OCI-LY7 (cell line): ENCODE measurements at regions of chr7 and their contacts with region 1.

Region 1: DNA sequence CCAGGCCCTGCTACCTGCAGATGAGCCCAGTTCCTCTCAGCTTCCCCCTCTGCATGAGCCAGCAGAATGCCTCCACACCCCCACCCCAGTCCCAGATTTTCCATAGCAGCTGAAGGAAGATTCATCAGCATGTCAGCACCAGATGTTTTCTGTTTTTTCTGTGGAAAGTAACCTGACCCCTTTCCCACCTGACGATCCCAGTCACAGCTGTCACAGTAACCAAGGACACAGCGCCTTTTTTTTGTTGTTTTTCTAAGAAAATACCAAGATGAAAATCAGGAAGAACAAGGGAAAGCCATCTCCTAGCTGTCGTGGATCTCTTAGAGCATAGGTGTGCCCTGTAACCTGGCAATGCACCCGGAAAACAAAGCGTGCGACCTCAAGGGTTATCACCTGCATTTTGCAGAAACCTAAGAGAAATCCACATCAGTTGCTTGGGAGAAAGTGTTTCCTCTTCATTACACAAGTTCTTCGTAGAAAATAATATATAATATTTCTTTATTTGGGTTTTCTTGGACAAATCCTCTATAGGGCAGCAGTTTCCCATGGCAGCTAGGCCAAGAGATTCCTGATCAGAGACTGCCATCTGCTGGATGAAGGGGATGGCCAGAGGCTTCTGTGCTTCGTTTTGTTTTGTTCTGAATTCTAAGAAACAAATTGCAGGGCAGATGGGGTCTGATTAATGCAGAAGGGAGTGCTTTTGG is 401.9 kb downstream of the TNS3 start:
- DNase-seq: peak; percentile 85
- H3K4me3 ChIP-seq: peak overlapping the region; percentile 23
- H3K27ac ChIP-seq: peak overlapping the region; percentile 8
- H3K4me1 ChIP-seq: peaks cover 55% of the 10 kb centered on the region
- CTCF ChIP-seq: peak; percentile 98

Region 2: GRCh38 chr7:45923290-45923689 is 1256.7 kb before region 1 on chr7:
- CTCF ChIA-PET with region 1: no interaction called
- POLR2A ChIA-PET with region 1: interaction called, 3 read pairs
- intact Hi-C with region 1: loop called (anchors 2 kb)
- DNase-seq: peak; percentile 57
- H3K4me3 ChIP-seq: no peak overlapping the region
- H3K27ac ChIP-seq: no peak overlapping the region
- H3K4me1 ChIP-seq: peaks cover 4% of the 10 kb centered on the region
- CTCF ChIP-seq: peak; percentile 99

Region 3: DNA sequence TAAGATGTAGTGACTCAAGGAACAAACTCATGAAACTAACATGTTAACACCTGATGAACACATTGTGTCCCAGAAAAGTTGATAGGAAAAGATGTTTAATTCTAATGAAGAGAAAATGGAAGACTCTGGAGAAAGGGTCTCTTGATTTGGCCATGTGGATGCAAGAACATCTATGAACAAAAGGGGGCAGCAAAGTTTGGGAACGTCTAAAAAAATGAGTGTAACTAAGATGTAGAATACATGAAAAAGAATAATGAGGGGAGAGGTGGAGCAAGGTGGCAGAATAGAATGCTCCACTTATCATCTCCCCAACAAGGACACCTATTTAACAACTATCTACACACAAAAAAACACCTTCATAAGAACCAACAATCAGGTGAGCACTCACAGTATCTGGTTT is 403.2 kb before region 1 on chr7:
- CTCF ChIA-PET with region 1: no interaction called
- POLR2A ChIA-PET with region 1: no interaction called
- intact Hi-C with region 1: loop called (anchors 1 kb)
- DNase-seq: peak; percentile 53
- H3K4me3 ChIP-seq: no peak overlapping the region
- H3K27ac ChIP-seq: no peak overlapping the region
- H3K4me1 ChIP-seq: no peaks in the 10 kb centered on the region
- CTCF ChIP-seq: peak; percentile 80

Region 4: GRCh38 chr7:47008461-47008860 is 171.5 kb before region 1 on chr7:
- CTCF ChIA-PET with region 1: no interaction called
- POLR2A ChIA-PET with region 1: no interaction called
- intact Hi-C with region 1: loop called (anchors 10 kb)
- DNase-seq: no peak
- H3K4me3 ChIP-seq: no peak overlapping the region
- H3K27ac ChIP-seq: no peak overlapping the region
- H3K4me1 ChIP-seq: no peaks in the 10 kb centered on the region
- CTCF ChIP-seq: no peak

Region 5: DNA sequence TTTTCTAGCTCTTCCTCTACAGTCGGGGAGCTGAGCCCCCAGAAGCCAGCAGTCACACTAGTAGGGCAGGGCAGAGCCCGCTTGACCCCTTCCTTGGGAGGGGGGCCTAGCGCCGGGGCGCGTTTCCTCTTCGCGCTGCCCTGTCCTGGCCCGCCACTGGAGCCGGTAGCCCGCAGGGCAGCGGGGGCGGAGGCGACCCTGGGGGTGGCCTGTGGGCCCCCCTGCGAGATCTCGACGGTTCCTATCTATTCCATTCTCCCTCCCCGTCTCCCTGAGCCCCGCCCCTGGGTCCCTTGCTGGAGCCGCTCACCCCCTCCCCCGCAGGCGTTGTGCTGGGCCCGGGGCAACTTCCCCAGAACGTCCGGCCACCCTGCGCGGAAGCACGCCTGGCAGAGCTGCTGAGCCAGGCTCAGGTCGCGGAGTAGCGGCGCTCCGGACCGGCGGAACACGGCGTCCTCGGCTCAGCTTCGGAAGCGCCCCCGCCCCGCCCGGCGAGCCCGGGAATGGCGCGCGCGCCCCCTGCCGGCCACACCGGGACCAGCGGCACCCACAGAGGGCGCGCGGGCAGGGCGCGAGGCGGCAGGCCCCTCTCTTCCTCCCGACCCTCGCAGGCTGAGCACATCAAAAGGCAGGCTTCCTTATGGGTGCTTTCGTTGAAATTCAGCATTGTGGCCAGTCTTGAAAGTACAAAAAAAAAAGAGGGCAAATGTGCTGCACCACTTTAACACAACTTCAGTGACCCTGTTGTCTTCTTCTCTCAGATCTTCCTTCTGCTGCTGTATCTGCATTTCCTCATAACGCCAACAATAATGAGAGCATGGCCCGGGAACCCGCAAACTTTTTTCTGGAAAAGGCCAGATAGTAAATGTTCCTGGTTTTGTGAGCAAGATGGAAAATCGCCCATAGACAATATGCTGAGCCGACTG is 74.4 kb after region 1 on chr7:
- CTCF ChIA-PET with region 1: no interaction called
- POLR2A ChIA-PET with region 1: interaction called, 3 read pairs
- intact Hi-C with region 1: loop called (anchors 2 kb)
- DNase-seq: peak; percentile 79
- H3K4me3 ChIP-seq: peak overlapping the region; percentile 50
- H3K27ac ChIP-seq: no peak overlapping the region
- H3K4me1 ChIP-seq: peaks cover 9% of the 10 kb centered on the region
- CTCF ChIP-seq: peak; percentile 87